ENCODE measurements at regions of chr5 and their contacts with region 1.

Region 1: DNA sequence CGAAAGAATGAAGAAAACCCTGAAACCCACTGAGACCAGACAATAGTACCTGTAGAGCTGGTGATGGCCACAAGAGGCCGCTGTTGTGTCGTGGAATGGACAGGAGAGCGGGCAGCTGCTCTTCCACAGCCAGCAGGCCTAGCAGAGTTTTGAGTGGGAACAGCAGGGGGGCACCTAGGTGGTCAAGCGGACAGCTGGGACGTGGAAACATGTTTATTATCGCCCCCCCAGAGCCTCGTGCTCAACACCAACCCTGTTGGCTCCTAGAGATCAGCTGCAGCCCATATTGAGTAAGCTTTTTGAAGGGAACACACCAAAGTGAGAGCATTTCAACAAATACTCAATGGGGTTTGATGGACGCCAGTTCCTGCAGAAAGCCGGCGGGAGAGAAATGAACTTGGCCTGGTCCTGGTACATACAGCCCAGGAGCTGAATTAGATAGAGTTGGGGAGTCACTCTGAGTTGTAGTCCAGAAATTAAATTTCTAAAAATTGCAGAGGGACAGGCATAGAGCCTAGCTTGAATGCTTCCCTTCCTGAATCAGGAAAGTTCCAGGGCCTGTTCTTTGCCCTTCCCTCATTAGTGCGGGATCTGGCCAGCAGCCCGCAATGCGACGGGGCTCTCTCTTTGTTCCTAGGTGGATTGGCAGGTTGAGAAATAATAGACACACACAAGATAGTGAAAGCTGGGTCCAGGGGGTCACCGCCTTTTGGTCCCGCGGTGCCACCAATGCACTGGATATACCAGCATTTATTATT is 33.8 kb downstream of the MFAP3 start:
- DNase-seq: peak; percentile 72
- ATAC-seq: peak; percentile 97
- H3K4me3 Mint-ChIP-seq: no peak overlapping the region
- H3K27ac Mint-ChIP-seq: no peak overlapping the region
- H3K4me1 Mint-ChIP-seq: peaks cover 2% of the 10 kb centered on the region
- H3K27me3 Mint-ChIP-seq: peaks cover 13% of the 10 kb centered on the region
- CTCF ChIP-seq: peak; percentile 56

Region 2: GRCh38 chr5:153974131-153974812 is 98.3 kb before region 1 on chr5:
- CTCF ChIA-PET with region 1: interaction called, 9 read pairs
- POLR2A ChIA-PET with region 1: no interaction called
- intact Hi-C with region 1: loop called (anchors 1 kb)
- DNase-seq: no peak
- ATAC-seq: no peak
- H3K4me3 Mint-ChIP-seq: no peak overlapping the region
- H3K27ac Mint-ChIP-seq: no peak overlapping the region
- H3K4me1 Mint-ChIP-seq: no peaks in the 10 kb centered on the region
- H3K27me3 Mint-ChIP-seq: peaks cover 10% of the 10 kb centered on the region
- CTCF ChIP-seq: no peak

Region 3: DNA sequence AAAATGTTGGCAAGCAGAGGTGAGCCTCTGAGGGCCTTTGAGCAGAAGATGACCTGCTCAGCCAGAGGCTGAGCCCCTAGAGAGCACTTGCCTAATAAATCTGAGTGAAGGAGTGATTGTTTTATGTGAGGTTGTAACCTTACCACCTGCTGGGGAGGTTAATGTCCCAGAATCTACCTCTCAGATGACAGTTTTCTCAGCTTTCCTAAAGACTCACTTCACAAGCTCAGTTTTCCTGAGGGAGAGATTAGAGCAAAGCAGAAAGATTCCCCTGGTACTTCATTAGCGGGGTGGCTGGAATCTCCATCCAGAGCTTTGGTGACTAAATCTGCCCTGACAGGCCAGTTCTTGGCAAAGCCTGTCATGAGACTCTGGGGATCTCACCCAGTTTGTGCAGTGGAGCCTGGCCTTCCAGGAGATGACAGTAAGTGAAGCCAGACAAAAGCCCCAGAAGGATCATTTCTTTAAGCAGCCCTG is 69.2 kb after region 1 on chr5:
- CTCF ChIA-PET with region 1: no interaction called
- POLR2A ChIA-PET with region 1: no interaction called
- intact Hi-C with region 1: no loop called
- DNase-seq: no peak
- ATAC-seq: no peak
- H3K4me3 Mint-ChIP-seq: no peak overlapping the region
- H3K27ac Mint-ChIP-seq: no peak overlapping the region
- H3K4me1 Mint-ChIP-seq: no peaks in the 10 kb centered on the region
- H3K27me3 Mint-ChIP-seq: peaks cover 28% of the 10 kb centered on the region
- CTCF ChIP-seq: no peak

Region 4: DNA sequence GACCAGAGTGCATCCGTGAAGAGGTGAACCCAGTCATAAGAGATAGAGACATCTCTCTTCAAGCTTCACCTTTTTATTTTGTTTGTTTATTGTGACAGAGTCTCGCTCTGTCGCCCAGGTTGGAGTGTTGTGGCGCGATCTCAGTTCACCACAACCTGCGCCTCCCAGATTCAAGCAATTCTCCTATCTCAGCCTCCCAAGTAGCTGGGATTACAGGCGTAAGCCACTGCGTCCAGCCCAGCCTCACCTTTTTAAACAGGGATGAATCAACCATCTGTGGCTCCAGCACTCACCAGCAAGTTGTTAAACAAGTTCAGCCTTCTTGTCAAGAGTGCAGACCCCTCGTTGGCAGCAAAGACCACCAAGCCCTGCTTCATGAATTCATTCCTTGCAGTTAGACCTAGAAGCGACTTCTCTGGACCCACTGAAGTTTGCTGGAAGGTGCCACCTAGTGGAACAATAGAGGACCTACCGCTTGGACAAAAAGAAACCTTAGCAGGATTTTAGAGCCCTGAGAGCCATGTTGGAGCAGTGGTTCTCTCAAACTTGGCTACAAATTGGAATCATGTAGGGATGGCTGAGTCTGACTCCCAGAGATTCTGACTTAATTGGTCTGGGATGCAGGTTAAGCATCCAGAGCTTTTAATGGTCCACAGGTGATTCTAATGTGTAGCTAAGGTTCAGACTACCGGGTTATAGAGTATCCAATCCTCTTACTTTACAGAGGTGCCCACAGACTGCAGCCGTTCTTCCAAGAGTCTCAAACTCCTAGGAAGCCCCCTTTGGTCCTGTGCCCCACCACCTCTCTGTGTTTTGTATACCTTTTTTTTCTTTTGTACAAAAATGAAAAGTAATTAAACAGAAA is 107.5 kb after region 1 on chr5:
- CTCF ChIA-PET with region 1: interaction called, 15 read pairs
- POLR2A ChIA-PET with region 1: no interaction called
- intact Hi-C with region 1: loop called (anchors 1 kb)
- DNase-seq: no peak
- ATAC-seq: peak; percentile 93
- H3K4me3 Mint-ChIP-seq: no peak overlapping the region
- H3K27ac Mint-ChIP-seq: no peak overlapping the region
- H3K4me1 Mint-ChIP-seq: peaks cover 15% of the 10 kb centered on the region
- H3K27me3 Mint-ChIP-seq: peaks cover 9% of the 10 kb centered on the region
- CTCF ChIP-seq: no peak

Region 5: DNA sequence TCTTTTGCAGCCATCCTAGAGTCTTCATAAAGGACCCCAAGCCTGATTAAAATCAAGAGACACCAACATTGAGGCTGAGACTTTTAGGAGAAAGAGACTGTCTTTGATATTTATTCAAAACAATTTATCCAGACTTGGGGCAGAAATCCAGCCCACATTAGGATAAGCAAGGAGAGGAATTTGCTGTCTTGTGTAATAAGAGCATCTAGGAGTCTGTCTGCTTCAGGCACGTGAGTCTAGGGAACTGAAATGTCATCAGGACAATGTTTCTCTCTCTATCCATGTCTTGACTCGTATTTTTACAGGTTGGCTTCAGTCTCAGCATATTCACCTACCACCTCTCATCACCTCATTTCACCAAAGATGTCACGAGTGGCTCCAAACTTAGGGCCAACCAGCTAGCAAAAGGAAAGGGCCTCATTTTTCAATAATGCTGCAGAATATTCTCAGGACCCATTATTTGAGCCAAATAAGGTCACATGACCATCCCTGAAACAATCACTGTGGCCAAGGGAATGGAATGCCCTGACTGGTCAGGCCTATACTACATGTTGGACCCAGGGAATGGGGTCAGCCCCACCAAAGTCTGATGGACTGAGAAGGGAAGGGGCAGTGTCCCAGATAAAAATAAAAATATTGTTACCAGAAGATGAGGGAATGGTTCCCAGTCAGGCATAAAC is 302.9 kb after region 1 on chr5:
- CTCF ChIA-PET with region 1: no interaction called
- POLR2A ChIA-PET with region 1: no interaction called
- intact Hi-C with region 1: no loop called
- DNase-seq: no peak
- ATAC-seq: no peak
- H3K4me3 Mint-ChIP-seq: no peak overlapping the region
- H3K27ac Mint-ChIP-seq: no peak overlapping the region
- H3K4me1 Mint-ChIP-seq: no peaks in the 10 kb centered on the region
- H3K27me3 Mint-ChIP-seq: no peaks in the 10 kb centered on the region
- CTCF ChIP-seq: no peak

Region 6: GRCh38 chr5:154405078-154405792 is 332.6 kb after region 1 on chr5:
- CTCF ChIA-PET with region 1: interaction called, 169 read pairs
- POLR2A ChIA-PET with region 1: interaction called, 9 read pairs
- intact Hi-C with region 1: loop called (anchors 1 kb)
- DNase-seq: peak; percentile 67
- ATAC-seq: peak; percentile 100
- H3K4me3 Mint-ChIP-seq: peak overlapping the region; percentile 77
- H3K27ac Mint-ChIP-seq: no peak overlapping the region
- H3K4me1 Mint-ChIP-seq: peaks cover 7% of the 10 kb centered on the region
- H3K27me3 Mint-ChIP-seq: no peaks in the 10 kb centered on the region
- CTCF ChIP-seq: no peak

Region 7: DNA sequence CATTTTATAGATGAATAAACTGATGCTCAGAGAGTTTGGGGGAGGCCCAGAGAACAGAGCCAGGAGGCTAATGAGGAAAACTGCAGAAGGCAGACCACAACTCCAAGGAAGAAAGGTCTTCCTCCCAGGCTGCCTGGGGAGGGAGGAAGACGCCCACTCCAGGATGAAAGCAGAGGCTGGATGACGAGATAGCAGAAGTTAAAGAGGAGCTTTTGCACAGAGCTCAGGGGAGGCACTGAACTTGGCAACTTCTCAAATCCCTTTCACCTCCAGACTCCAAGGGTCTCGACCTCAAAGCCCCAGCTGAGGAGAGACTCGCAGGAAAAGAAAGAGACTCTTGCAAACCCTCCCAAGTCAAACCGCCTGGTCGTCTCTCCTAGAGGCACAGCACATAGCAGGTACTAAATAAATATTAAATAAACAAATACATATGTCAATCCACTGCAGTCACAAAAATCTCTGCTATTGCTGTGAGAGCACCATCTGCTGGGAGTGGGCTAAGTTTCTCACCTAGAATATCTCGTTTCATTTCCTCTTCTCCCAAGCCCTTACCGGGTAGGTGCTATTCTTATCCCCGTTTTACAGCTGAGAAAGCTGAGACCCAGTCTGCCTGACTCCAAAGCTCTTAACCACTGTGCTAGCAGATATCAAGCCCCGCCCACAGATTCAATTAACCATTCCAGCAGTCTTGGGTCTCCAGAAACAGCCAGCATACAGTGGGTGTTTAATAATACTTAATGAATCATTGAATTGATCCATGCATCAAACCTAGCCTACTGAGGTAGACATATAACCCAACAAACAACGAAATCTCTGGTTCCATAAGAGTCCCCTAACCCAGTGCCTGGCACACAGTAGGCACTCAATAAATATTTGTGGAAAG is 503.2 kb after region 1 on chr5:
- CTCF ChIA-PET with region 1: interaction called, 3 read pairs
- POLR2A ChIA-PET with region 1: no interaction called
- intact Hi-C with region 1: loop called (anchors 1 kb)
- DNase-seq: no peak
- ATAC-seq: peak; percentile 45
- H3K4me3 Mint-ChIP-seq: no peak overlapping the region
- H3K27ac Mint-ChIP-seq: no peak overlapping the region
- H3K4me1 Mint-ChIP-seq: peaks cover 9% of the 10 kb centered on the region
- H3K27me3 Mint-ChIP-seq: peaks cover 5% of the 10 kb centered on the region
- CTCF ChIP-seq: no peak

Measured in activated B cell treated with CpG ODN at 0.5 μM for 24 hours (primary cell).